ENCODE measurements at regions of chr12 and their contacts with region 1.

Region 1: GRCh38 chr12:6062757-6063735 is 61.4 kb downstream of the VWF start:
- DNase-seq: peak in 1 of 2 donors; percentile 15
- ATAC-seq: peak; percentile 45 to 54
- H3K4me3 ChIP-seq: no peak overlapping the region
- H3K27ac ChIP-seq: no peak overlapping the region
- H3K4me1 ChIP-seq: no peaks in the 10 kb centered on the region
- H3K27me3 ChIP-seq: no peaks in the 10 kb centered on the region
- CTCF ChIP-seq: peak; percentile 67 to 77 (median 75)
- POLR2A ChIP-seq: no peak

Region 2: GRCh38 chr12:6285063-6285477 is 222.0 kb after region 1 on chr12:
- in situ Hi-C with region 1: loop called in 3 of 4 experiments (anchors 5 to 10 kb)
- intact Hi-C with region 1: loop called (anchors 1 kb)
- DNase-seq: peak; percentile 19 to 53
- ATAC-seq: peak; percentile 75 to 89
- H3K4me3 ChIP-seq: no peak overlapping the region
- H3K27ac ChIP-seq: no peak overlapping the region
- H3K4me1 ChIP-seq: peaks cover 0 to 4% of the 10 kb centered on the region in 2 donors
- H3K27me3 ChIP-seq: peaks cover 0 to 2% (median 0%) of the 10 kb centered on the region in 3 donors
- CTCF ChIP-seq: peak; percentile 88 to 95 (median 92)
- POLR2A ChIP-seq: no peak